ENCODE measurements at regions of chr17 and their contacts with region 1.

Region 1: GRCh38 chr17:78250891-78251794 is 19.7 kb downstream of the TMEM235 start:
- DNase-seq: peak; percentile 94
- CTCF ChIP-seq: peak; percentile 99

Region 2: DNA sequence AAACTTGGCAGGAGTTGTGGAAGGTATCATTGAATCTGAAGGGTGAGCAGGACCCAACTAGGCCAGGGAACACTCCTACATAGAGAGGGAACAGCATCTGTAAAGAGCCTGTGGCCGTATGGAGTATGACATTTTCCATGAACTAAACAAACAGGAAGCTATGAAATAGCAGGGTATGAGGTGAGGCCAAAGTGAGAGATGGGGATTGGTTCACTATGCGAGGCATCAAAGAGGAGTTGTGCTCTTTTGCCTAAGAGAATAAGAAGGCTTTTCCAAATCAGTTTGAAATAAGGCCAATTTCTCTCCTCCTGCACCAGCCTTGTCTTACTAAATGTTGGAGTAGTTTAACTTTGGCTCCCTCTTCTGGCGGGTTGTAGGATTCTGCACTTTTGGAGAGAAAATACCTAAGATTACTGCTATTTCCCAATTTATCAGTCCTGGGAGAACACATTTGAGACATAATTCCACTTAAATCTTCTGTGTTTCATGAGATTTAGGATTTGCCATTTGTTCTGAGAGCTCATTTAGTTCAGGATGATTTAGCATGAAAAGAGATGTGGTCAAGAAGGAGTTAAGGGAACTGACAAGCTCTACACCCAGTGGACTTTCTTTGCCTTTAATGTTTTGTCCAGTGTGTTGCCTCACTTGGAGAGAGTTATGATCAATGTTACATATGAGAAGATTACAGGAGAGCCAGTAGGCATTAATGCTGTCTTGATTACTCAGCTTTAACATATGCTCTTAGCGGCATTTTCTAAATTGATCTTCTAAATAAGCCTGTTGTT is 237.3 kb before region 1 on chr17:
- CTCF ChIA-PET with region 1: interaction called, 59 read pairs
- POLR2A ChIA-PET with region 1: no interaction called
- DNase-seq: peak; percentile 58
- CTCF ChIP-seq: peak; percentile 70

Region 3: GRCh38 chr17:78089576-78090281 is 161.4 kb before region 1 on chr17:
- CTCF ChIA-PET with region 1: interaction called, 70 read pairs
- POLR2A ChIA-PET with region 1: no interaction called
- DNase-seq: no peak
- CTCF ChIP-seq: no peak

Region 4: DNA sequence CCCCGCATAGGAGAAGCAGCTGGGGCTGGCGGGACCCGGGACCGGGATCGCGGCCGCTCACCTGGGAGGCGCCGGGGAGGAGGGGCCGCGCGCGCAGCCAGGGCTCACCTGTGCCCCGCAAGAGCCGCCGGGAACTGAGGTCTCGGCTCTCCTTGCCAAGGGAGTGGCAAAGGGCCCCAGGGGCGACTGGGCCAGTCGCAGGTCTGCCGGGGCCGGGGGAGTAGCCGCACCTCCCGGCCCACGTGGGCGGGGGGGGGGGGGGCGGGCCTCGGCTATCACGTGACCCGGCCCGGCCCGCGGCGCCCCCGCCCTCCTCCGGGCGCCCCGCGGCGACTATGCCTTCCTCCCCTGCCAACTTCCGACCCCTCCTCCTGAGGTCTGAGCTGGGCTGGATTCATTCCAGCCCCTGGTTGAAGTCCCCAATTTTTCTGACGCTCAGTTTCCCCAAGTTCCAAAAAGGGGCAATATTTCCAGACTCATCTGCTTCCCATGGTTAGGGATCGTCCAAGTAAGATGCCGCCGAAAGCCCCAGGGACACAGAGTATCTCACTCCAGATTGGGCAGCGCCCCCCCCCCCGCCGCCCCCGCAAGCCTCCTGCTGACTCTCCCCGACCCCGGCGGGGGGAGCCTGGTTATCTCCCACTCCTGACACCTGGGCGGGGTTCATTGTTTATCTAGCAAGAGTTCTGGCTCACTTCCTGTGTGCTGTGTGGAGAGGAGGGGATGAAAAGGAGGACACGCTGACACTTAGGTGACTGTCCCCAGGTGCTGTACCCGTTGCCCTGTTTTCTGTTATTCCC is 122.4 kb before region 1 on chr17 and contains the start of gene TMC6:
- CTCF ChIA-PET with region 1: interaction called, 11 read pairs
- POLR2A ChIA-PET with region 1: no interaction called
- DNase-seq: peak; percentile 89
- CTCF ChIP-seq: no peak

Region 5: GRCh38 chr17:78226749-78227399 is 24.3 kb before region 1 on chr17:
- CTCF ChIA-PET with region 1: interaction called, 27 read pairs
- POLR2A ChIA-PET with region 1: interaction called, 3 read pairs
- DNase-seq: no peak
- CTCF ChIP-seq: no peak

Region 6: DNA sequence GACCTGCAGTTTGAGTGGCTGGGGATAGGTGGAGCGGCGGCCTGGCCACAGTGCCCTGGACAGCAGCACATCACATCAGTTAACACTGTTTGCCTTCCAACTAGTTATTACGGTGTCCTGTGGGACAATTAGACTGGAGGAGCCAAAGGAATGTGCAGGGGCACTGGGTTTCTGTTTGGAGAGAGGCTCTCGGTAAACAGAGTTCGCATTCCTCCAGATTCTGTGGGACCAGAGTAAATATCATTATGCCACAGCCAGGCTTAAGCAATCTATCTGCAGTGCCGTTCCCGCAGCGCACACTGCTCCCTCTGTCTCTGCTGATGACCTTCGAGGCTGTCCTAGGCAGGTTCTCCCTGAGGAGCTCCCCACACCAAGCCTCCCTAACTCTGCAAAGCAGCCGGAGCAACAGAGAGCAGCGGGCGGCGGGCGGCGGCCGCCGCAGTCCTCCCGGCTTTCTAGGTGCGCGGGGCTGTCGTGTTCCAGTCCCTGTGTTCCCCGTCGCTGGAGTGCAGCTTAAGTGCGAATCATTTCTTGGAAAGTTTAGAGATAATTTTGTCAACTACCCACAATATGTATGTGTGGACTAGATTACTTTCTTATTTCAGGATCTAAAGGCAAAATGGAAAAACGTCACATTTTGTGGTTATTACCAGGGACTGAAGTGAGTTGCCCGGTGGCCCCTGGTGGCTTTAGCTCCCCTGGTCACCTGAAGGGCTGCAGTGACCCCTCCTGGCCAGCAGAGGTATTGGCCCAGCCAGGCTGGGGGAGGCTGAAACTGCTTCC is 170.5 kb after region 1 on chr17:
- CTCF ChIA-PET with region 1: interaction called, 71 read pairs
- POLR2A ChIA-PET with region 1: no interaction called
- DNase-seq: peak; percentile 88
- CTCF ChIP-seq: peak; percentile 98

Measured in GM10248 (cell line).